ENCODE measurements at regions of chr17 and their contacts with region 1.

Region 1: DNA sequence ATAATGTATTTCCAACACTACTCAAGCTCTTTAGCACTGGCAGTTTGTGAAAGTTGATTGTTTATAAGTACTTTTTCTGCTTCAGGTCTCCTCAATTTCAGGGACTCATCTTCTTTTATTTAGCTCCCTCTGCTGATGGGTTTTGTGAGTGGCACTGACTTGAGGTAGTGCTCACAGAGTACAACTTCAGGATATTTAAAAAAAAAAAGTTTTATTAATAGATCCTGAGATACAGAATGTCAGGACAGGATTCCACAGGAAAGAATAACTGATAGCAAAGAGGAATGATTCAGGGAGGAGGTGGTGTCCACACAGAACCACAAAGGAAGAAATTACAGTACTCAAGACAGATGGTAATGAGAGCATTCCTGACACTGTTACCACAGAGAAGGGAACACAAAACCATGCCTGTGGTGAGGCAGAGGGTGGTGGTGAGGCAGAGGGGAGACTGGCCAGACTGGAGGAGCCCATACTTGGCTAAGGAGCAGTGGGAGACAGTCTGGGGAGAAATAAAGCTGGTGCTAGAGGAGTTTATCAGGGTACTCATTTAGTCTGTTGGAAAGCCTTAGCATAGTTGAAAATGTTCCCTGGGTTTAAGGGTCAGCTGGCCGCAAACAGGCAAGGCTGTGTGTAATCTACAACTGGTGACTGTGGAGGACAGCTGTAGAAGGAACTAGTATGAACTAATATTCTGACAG is 63.7 kb downstream of the SPAG9 start:
- DNase-seq: no peak
- ATAC-seq: peak; percentile 64
- H3K4me3 ChIP-seq: no peak overlapping the region
- H3K27ac ChIP-seq: peak overlapping the region in 1 of 2 donors; percentile 78
- H3K4me1 ChIP-seq: peaks cover 0 to 2% of the 10 kb centered on the region in 2 donors
- H3K27me3 ChIP-seq: no peaks in the 10 kb centered on the region

Region 2: GRCh38 chr17:50967795-50968194 is 89.2 kb before region 1 on chr17:
- intact Hi-C with region 1: no loop called
- DNase-seq: no peak
- ATAC-seq: peak; percentile 83
- H3K4me3 ChIP-seq: no peak overlapping the region
- H3K27ac ChIP-seq: peak overlapping the region in 1 of 2 donors; percentile 85
- H3K4me1 ChIP-seq: no peaks in the 10 kb centered on the region
- H3K27me3 ChIP-seq: no peaks in the 10 kb centered on the region

Region 3: DNA sequence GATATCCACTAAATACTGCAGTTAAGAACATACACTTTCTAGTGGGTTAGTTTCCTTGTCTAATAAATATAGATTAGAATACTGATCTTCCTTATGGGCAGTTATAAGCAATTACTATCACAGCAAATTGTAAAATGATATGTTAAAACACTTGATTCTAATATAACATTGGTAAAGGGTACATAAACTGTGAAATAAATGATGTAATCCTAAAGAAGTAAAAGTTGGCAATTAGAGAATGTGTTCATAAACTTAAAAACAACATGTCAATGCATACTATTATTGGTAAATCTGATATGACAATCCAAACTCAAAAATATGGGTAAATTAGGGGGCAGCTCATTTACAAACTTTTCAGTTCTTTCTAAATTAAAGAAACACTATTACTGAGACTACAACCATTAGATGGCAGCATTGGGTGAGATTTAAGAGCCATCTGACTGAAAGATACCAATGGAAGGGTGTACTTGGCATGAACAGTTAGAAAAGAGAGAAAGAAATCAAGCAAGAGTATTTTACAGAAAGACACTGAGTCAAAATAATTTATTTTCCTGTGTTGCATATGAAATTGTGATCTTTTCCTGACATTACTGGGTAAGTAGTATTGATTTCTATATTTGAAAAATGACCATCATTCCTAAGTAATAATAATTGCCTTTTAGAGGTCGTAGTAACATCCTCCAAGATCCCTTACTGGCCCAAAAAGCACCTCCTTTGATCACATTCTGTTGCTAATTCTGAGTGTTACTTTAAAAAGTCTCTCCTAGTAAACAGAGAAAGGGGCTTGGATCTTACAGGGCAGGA is 55.9 kb before region 1 on chr17:
- intact Hi-C with region 1: loop called (anchors 5 to 10 kb)
- DNase-seq: no peak
- ATAC-seq: no peak
- H3K4me3 ChIP-seq: no peak overlapping the region
- H3K27ac ChIP-seq: no peak overlapping the region
- H3K4me1 ChIP-seq: no peaks in the 10 kb centered on the region
- H3K27me3 ChIP-seq: no peaks in the 10 kb centered on the region